Activated CD4-positive, alpha-beta memory T cell treated with anti-CD3 and anti-CD28 coated beads, Interleukin-2, amount 10 ng/mL, durations not matched to agents 7 days and 5 days (primary cell): ENCODE measurements at regions of chr6 and their contacts with region 1.

Region 1: GRCh38 chr6:136751522-136751956 is 40.7 kb downstream of the MAP3K5 start:
- DNase-seq: peak; percentile 55
- H3K4me3 Mint-ChIP-seq: peak overlapping the region; percentile 51
- H3K27ac Mint-ChIP-seq: peak overlapping the region; percentile 91
- H3K4me1 Mint-ChIP-seq: peaks cover 78% of the 10 kb centered on the region
- H3K27me3 Mint-ChIP-seq: no peaks in the 10 kb centered on the region

Region 2: GRCh38 chr6:136501514-136501913 is 250.0 kb before region 1 on chr6:
- CTCF ChIA-PET with region 1: no interaction called
- POLR2A ChIA-PET with region 1: no interaction called
- DNase-seq: no peak
- H3K4me3 Mint-ChIP-seq: no peak overlapping the region
- H3K27ac Mint-ChIP-seq: no peak overlapping the region
- H3K4me1 Mint-ChIP-seq: no peaks in the 10 kb centered on the region
- H3K27me3 Mint-ChIP-seq: peaks cover 2% of the 10 kb centered on the region

Region 3: DNA sequence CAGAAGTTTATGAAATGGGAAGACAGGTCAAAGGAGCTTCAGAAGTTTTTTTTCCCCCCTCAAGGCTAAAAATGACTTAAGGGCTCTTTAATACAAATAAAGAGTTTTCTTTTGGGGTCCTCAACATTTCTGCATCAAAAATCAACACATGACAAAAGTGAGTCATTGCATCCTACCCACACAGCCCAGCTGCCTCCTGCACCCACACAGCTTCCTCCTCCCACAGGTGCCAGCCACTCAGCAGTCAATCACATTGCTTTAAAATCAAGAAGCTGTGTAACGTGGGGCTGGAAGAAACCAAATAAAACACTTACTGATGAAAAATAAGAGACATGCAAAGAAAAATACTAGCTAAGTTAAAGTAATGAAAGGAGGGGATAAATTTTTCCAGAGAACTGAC is 27.8 kb before region 1 on chr6:
- CTCF ChIA-PET with region 1: no interaction called
- POLR2A ChIA-PET with region 1: interaction called, 12 read pairs
- DNase-seq: peak; percentile 56
- H3K4me3 Mint-ChIP-seq: no peak overlapping the region
- H3K27ac Mint-ChIP-seq: no peak overlapping the region
- H3K4me1 Mint-ChIP-seq: peaks cover 43% of the 10 kb centered on the region
- H3K27me3 Mint-ChIP-seq: no peaks in the 10 kb centered on the region

Region 4: GRCh38 chr6:136783495-136784270 is 32.1 kb after region 1 on chr6:
- CTCF ChIA-PET with region 1: interaction called, 3 read pairs
- POLR2A ChIA-PET with region 1: interaction called, 36 read pairs
- DNase-seq: no peak
- H3K4me3 Mint-ChIP-seq: peak overlapping the region; percentile 62
- H3K27ac Mint-ChIP-seq: peak overlapping the region; percentile 76
- H3K4me1 Mint-ChIP-seq: peaks cover 72% of the 10 kb centered on the region
- H3K27me3 Mint-ChIP-seq: no peaks in the 10 kb centered on the region

Region 5: GRCh38 chr6:137051790-137052472 is 300.4 kb after region 1 on chr6:
- CTCF ChIA-PET with region 1: no interaction called
- POLR2A ChIA-PET with region 1: no interaction called
- DNase-seq: no peak
- H3K4me3 Mint-ChIP-seq: no peak overlapping the region
- H3K27ac Mint-ChIP-seq: no peak overlapping the region
- H3K4me1 Mint-ChIP-seq: no peaks in the 10 kb centered on the region
- H3K27me3 Mint-ChIP-seq: peaks cover 57% of the 10 kb centered on the region